Calu3 (cell line): ENCODE measurements at regions of chr15 and their contacts with region 1.

Region 1: DNA sequence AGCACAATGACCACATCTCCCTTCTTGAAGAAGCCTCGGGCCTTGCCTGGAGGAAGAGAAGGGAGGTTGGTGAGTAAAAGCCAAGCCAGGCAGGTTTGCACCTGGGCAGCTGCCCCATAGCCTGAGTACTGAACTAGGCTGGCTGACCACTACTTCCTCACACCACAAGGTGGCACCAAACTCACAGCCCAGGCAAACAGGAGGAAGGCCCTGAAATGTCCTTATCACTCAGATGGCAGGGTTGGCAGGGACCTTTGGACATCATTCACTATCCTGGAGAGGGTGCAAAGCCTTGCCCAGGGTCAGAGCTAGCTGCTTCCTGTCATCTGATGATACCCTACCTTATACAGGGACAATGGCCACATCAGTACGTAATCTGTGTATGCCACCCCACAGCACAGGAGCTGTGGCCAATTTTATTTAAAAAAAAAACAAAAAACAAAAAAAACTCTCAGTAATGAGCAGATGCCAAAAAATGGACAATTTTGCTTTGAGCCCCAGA is 2.2 kb upstream of the GRAMD2A start:
- DNase-seq: peak; percentile 88
- H3K4me3 Mint-ChIP-seq: no peak overlapping the region
- H3K27ac Mint-ChIP-seq: no peak overlapping the region
- H3K4me1 Mint-ChIP-seq: peaks cover 38% of the 10 kb centered on the region
- H3K27me3 Mint-ChIP-seq: no peaks in the 10 kb centered on the region
- CTCF ChIP-seq: peak; percentile 93

Region 2: DNA sequence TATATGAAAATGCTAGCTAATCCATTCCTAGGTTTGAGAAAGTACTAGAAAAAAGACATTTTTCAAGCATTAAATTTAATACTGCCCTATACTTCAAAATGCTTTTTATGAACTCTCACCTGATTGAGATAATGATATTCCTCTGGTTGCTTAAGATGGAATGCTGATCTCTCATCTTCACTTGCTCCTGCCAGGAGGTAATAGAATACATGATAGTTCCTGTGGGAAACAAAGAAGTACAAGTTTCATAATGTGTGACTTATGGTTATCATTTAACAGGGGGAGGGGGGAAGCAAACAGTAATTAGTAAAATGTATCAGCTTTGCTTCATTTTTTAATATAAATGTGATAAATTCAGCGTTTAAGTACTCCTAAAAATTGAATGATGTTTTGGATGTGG is 179.0 kb before region 1 on chr15:
- CTCF ChIA-PET with region 1: no interaction called
- intact Hi-C with region 1: no loop called
- DNase-seq: no peak
- H3K4me3 Mint-ChIP-seq: no peak overlapping the region
- H3K27ac Mint-ChIP-seq: no peak overlapping the region
- H3K4me1 Mint-ChIP-seq: no peaks in the 10 kb centered on the region
- H3K27me3 Mint-ChIP-seq: no peaks in the 10 kb centered on the region
- CTCF ChIP-seq: no peak

Region 3: GRCh38 chr15:72249142-72249810 is 49.5 kb after region 1 on chr15:
- CTCF ChIA-PET with region 1: no interaction called
- intact Hi-C with region 1: no loop called
- DNase-seq: no peak
- H3K4me3 Mint-ChIP-seq: no peak overlapping the region
- H3K27ac Mint-ChIP-seq: no peak overlapping the region
- H3K4me1 Mint-ChIP-seq: no peaks in the 10 kb centered on the region
- H3K27me3 Mint-ChIP-seq: no peaks in the 10 kb centered on the region
- CTCF ChIP-seq: no peak

Region 4: DNA sequence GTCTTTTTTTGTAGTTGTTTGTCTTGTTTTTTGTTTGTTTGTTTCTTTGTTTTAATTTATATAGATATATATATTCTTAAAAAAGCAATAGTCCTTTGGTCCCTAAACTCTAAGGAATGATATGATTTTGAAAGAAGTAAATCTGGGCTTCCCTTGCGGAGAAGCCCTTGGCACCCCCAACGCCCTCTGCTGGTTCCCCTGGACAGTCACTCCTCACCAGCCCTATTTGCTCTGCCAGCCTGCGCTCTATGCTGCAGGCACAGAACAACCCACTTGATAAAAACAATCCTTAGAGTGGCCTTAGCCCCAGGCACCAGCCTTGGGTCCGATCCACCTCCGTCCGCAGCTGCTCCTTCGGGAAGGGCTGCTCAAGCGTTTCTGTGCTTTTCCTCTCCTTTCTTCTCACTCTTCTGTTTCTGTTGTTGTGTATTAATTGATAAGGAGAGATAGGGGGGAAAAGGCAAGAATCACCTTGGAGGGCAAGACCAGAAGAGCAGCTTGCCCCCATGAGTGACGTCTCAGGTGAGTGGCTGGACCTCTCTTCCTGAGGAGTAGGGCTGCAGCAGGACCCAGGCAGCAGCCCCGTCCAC is 86.3 kb after region 1 on chr15:
- CTCF ChIA-PET with region 1: no interaction called
- intact Hi-C with region 1: loop called (anchors 2 kb)
- DNase-seq: peak; percentile 75
- H3K4me3 Mint-ChIP-seq: no peak overlapping the region
- H3K27ac Mint-ChIP-seq: no peak overlapping the region
- H3K4me1 Mint-ChIP-seq: no peaks in the 10 kb centered on the region
- H3K27me3 Mint-ChIP-seq: peaks cover 8% of the 10 kb centered on the region
- CTCF ChIP-seq: peak; percentile 41